Spleen (tissue), 13 donors: ENCODE measurements at regions of chr7 and their contacts with region 1.

Region 1: DNA sequence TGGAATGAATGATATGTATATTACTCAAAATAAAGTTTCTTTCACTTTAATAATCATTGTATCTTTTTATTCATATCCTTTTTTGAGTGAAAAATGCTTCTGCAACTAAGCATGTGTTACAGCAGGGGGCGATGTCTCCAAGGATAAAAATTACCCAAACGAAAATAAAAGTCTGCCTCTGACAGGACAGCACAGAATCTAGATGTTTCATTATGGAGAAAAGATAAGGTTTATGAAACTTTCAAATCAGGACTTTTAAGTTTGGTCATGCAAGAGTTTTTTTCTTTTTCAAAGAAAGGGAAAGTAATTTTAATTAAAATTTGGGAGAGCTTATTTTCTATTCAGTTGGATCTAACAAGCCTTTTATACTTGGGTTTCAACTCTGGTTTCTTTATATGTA is 48.4 kb downstream of the TES start:
- DNase-seq: no peak
- H3K4me3 ChIP-seq: no peak overlapping the region
- H3K27ac ChIP-seq: peak overlapping the region in 5 of 8 donors; percentile 12 to 48 (median 20)
- H3K4me1 ChIP-seq: peaks cover 0 to 11% (median 8%) of the 10 kb centered on the region in 6 donors
- H3K27me3 ChIP-seq: no peaks in the 10 kb centered on the region
- CTCF ChIP-seq: peak; percentile 50 to 86 (median 75)
- POLR2A ChIP-seq: no peak

Region 2: GRCh38 chr7:116525913-116526861 is 267.5 kb after region 1 on chr7:
- intact Hi-C with region 1: loop called (anchors 10 kb)
- DNase-seq: peak; percentile 93
- H3K4me3 ChIP-seq: peak overlapping the region; percentile 38 to 81 (median 58)
- H3K27ac ChIP-seq: peak overlapping the region; percentile 59 to 91 (median 88)
- H3K4me1 ChIP-seq: peaks cover 5 to 67% (median 42%) of the 10 kb centered on the region in 6 donors
- H3K27me3 ChIP-seq: peaks cover 0 to 46% (median 22%) of the 10 kb centered on the region in 7 donors
- CTCF ChIP-seq: peak in 10 of 11 experiments; percentile 19 to 94 (median 86)
- POLR2A ChIP-seq: peak in 1 of 3 donors; percentile 66

Region 3: DNA sequence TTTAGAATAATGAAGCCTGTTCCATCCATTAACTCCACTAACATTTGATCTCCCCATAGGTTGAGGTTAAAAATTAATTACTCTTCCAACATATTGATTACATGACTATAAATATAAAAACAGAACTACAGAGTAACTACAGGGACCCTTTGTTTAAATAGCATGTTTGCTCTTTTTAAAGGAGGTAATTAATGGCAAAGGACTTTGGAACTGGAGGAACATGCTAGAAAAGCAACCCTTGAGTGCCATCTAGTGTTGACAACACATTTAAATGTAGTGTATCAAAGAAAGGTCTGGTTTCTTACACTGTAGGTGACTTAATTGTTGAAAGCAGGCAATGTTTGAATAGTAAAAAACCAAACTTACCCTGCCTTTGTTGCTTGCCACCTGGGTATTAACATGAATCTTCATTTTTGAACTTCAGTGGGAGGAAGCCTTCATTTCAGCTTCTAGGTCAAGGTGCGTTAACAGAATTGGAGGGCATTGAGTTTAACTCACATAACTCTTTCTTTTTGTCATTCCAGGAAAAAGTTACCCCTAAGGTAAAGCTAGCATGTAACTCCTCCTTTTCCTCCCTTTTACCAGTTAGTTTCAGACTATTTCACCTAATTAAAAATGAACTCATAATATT is 551.0 kb after region 1 on chr7:
- intact Hi-C with region 1: loop called (anchors 10 kb)
- DNase-seq: no peak
- H3K4me3 ChIP-seq: no peak overlapping the region
- H3K27ac ChIP-seq: no peak overlapping the region
- H3K4me1 ChIP-seq: no peaks in the 10 kb centered on the region
- H3K27me3 ChIP-seq: no peaks in the 10 kb centered on the region
- CTCF ChIP-seq: peak in 9 of 11 experiments; percentile 37 to 67 (median 55)
- POLR2A ChIP-seq: no peak